ENCODE measurements at regions of chr5 and their contacts with region 1.

Region 1: DNA sequence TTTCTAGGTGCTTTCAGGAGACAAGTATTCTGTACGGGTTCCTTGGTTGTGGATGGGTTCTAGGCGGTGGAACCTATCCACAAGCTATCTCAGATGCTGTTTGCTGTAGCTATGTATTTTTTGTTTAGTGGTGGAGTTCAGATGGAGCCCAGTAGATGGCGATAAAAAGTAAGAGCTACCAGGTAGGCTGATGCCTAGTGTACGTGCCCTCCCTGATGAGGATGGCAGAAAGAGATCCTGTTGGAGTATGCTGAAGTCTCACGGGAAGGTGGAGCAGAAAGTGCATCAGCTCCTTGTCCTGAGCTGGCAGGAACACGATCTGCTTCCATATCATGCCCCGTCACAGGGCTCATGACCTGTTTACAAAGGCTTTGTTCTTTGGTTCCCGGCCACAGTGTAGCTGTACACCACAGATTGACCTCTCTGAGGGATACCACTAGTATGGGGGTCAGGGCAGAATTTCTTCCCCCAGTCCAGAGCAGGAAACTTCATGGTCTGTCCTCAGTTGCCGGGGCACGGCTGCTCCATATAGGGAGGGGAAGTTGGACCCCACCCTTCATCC is 12.6 kb upstream of the UGT3A2 start:
- DNase-seq: peak in 6 of 9 donors; percentile 14 to 36 (median 29)
- ATAC-seq: peak; percentile 82
- H3K4me3 ChIP-seq: no peak overlapping the region
- H3K4me3 Mint-ChIP-seq: no peak overlapping the region
- H3K27ac ChIP-seq: no peak overlapping the region
- H3K27ac Mint-ChIP-seq: no peak overlapping the region
- H3K4me1 ChIP-seq: no peaks in the 10 kb centered on the region
- H3K4me1 Mint-ChIP-seq: no peaks in the 10 kb centered on the region
- H3K27me3 ChIP-seq: no peaks in the 10 kb centered on the region
- H3K27me3 Mint-ChIP-seq: peaks cover 17 to 51% (median 27%) of the 10 kb centered on the region in 5 donors

Region 2: DNA sequence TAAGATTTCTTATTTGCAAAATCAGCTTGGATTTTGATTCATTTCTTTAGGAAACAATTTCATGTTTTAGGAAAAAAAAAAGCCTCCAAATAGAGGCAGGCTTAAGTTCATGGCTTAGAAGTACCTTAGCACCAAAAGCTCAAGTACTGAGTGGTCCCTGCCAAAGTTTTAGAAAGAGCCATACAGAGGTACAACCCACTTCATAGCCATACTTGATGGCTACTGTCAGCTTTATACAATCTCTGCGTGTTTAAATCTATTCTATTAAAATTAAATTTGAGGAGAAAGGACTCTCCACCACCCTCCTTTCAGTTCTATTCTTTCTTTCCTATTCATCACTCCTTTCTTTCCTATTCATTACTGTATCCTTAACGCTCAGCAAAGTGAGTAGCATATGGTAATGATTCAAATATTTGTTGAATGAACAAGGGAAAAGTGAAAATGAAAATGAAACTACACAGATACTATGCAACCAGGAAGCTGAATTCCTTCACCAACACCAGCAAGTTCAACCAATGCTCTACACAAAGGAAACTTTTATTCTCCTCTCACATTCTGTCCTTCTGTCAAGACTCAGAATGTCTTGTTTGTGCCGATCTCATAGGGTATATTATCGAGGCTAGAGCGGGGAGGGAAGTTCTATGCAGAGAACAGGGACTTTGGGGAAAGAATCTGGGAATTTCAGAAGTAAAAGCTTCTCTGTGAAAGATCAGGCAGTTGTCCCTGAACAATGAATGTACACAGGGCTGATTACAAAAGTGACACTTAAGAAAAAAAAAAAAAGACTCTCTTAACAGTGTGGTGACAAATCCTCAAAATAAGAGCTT is 600.2 kb before region 1 on chr5:
- CTCF ChIA-PET with region 1: no interaction called
- POLR2A ChIA-PET with region 1: no interaction called
- intact Hi-C with region 1: no loop called
- DNase-seq: peak in 6 of 9 donors; percentile 20 to 45 (median 32)
- ATAC-seq: peak; percentile 63
- H3K4me3 ChIP-seq: peak overlapping the region; percentile 23
- H3K4me3 Mint-ChIP-seq: peak overlapping the region; percentile 67 to 92 (median 78)
- H3K27ac ChIP-seq: peak overlapping the region; percentile 43
- H3K27ac Mint-ChIP-seq: peak overlapping the region; percentile 75 to 98 (median 89)
- H3K4me1 ChIP-seq: no peaks in the 10 kb centered on the region
- H3K4me1 Mint-ChIP-seq: peaks cover 8 to 23% (median 15%) of the 10 kb centered on the region in 7 donors
- H3K27me3 ChIP-seq: no peaks in the 10 kb centered on the region
- H3K27me3 Mint-ChIP-seq: peaks cover 0 to 9% (median 0%) of the 10 kb centered on the region in 5 donors

Region 3: DNA sequence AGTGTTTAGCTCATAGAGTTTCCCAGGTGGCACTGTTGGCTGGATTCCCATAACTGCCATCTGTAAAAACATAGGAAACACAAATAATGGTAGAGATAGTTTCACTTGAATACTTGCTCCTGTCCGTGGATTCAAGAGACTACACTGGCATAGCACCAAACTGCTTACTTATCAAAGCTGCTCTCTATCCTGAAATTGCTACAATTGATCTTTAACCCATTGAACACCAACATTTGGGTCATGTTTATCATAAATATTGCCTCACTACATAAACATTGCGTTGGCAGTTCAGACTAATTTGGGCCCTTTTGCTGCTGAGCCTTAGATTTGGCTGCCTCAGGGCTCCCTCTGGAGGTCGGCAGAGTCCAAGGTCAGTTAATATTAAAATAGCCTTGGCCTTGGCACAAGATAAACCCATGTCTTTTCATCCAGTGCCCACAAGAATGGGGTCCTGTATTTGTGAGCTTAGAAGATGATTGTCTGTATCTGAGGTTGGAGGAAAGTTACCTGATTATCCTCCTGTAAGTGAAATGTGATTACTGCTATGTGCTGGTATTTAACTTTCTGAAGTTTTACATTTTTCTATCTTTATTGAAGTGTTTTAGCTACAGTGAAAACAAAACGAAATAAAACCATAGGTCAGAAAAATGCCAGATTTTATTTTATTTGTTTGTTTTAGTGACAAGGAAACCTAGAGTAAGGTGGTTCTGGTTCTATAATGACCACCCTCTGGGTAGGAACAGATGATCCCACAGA is 226.5 kb after region 1 on chr5:
- CTCF ChIA-PET with region 1: interaction called, 3 read pairs
- POLR2A ChIA-PET with region 1: no interaction called
- intact Hi-C with region 1: loop called in 1 of 2 experiments (anchors 1 kb)
- DNase-seq: peak in 3 of 9 donors; percentile 3 to 10 (median 4)
- ATAC-seq: peak; percentile 46
- H3K4me3 ChIP-seq: no peak overlapping the region
- H3K4me3 Mint-ChIP-seq: no peak overlapping the region
- H3K27ac ChIP-seq: no peak overlapping the region
- H3K27ac Mint-ChIP-seq: no peak overlapping the region
- H3K4me1 ChIP-seq: no peaks in the 10 kb centered on the region
- H3K4me1 Mint-ChIP-seq: peaks cover 0 to 12% (median 6%) of the 10 kb centered on the region in 7 donors
- H3K27me3 ChIP-seq: no peaks in the 10 kb centered on the region
- H3K27me3 Mint-ChIP-seq: peaks cover 11 to 25% (median 15%) of the 10 kb centered on the region in 5 donors

Region 4: GRCh38 chr5:36507332-36507952 is 428.2 kb after region 1 on chr5:
- CTCF ChIA-PET with region 1: interaction called, 10 read pairs
- POLR2A ChIA-PET with region 1: interaction called, 5 read pairs
- intact Hi-C with region 1: loop called in 1 of 2 experiments (anchors 1 kb)
- DNase-seq: peak; percentile 28 to 69 (median 50)
- ATAC-seq: peak; percentile 70
- H3K4me3 ChIP-seq: no peak overlapping the region
- H3K4me3 Mint-ChIP-seq: no peak overlapping the region
- H3K27ac ChIP-seq: no peak overlapping the region
- H3K27ac Mint-ChIP-seq: no peak overlapping the region
- H3K4me1 ChIP-seq: no peaks in the 10 kb centered on the region
- H3K4me1 Mint-ChIP-seq: peaks cover 0 to 3% (median 0%) of the 10 kb centered on the region in 7 donors
- H3K27me3 ChIP-seq: no peaks in the 10 kb centered on the region
- H3K27me3 Mint-ChIP-seq: peaks cover 10 to 34% (median 20%) of the 10 kb centered on the region in 5 donors

Region 5: DNA sequence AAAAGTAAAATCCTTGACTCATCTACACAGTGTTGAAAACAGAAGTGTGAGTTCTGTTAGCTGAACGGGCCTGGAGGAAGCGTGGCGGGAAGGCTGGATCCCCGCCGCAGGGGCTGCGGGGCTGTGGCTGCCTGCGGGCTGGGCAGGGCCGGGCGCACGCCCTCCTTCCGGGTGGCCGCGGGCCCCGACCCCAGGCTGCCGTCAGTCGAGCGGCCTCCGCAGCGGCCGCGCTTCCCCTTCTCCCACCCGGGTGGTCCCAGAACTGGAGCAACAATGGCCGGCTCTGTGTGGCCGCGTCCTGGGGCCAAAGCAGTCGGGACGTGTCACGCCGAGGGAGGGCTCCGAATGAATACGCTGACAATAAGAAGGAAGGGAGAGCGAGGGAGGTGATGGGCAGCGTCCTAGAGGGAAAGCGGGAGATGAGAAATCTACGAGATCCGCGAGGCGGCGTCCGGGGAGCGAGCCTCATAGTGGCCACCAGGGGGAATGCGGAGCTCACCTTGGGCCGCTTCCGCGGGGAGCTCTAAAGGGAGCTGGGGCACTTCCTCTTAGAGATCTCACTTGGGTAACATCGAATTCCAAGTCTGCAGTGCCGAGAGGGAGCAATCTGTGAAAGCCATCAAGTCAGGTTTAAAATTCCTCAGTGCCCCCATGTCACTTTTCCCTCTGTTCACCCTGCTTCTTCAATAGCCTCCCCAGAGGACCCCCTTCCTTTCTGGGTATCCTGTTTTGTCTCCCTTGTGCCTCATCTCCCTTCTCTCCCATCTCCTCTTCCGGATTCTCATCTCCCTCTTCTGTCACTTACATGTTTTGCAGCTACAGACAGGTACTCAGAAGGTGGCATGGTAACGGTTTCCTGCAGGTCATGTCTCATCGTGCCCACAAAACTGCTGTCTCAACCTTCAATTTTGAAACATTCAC is 611.0 kb after region 1 on chr5:
- CTCF ChIA-PET with region 1: no interaction called
- POLR2A ChIA-PET with region 1: no interaction called
- intact Hi-C with region 1: loop called in 1 of 2 experiments (anchors 10 kb)
- DNase-seq: peak; percentile 24 to 64 (median 43)
- ATAC-seq: peak; percentile 81
- H3K4me3 ChIP-seq: peak overlapping the region; percentile 73
- H3K4me3 Mint-ChIP-seq: peak overlapping the region; percentile 72 to 91 (median 86)
- H3K27ac ChIP-seq: no peak overlapping the region
- H3K27ac Mint-ChIP-seq: peak overlapping the region in 3 of 9 donors; percentile 19 to 45 (median 21)
- H3K4me1 ChIP-seq: peaks cover 5 to 8% of the 10 kb centered on the region in 2 donors
- H3K4me1 Mint-ChIP-seq: peaks cover 7 to 14% (median 12%) of the 10 kb centered on the region in 7 donors
- H3K27me3 ChIP-seq: no peaks in the 10 kb centered on the region
- H3K27me3 Mint-ChIP-seq: peaks cover 19 to 36% (median 33%) of the 10 kb centered on the region in 5 donors